ENCODE measurements at regions of chr9 and their contacts with region 1.

Region 1: GRCh38 chr9:31674264-31674663 is 710.2 kb upstream of the ACO1 start:
- DNase-seq: no peak
- H3K4me3 Mint-ChIP-seq: no peak overlapping the region
- H3K27ac Mint-ChIP-seq: no peak overlapping the region
- H3K4me1 Mint-ChIP-seq: peaks cover 32% of the 10 kb centered on the region
- H3K27me3 Mint-ChIP-seq: no peaks in the 10 kb centered on the region

Region 2: GRCh38 chr9:31347082-31347617 is 327.1 kb before region 1 on chr9:
- intact Hi-C with region 1: loop called (anchors 10 kb)
- DNase-seq: no peak
- H3K4me3 Mint-ChIP-seq: peak overlapping the region; percentile 71
- H3K27ac Mint-ChIP-seq: peak overlapping the region; percentile 94
- H3K4me1 Mint-ChIP-seq: peaks cover 33% of the 10 kb centered on the region
- H3K27me3 Mint-ChIP-seq: no peaks in the 10 kb centered on the region

Region 3: DNA sequence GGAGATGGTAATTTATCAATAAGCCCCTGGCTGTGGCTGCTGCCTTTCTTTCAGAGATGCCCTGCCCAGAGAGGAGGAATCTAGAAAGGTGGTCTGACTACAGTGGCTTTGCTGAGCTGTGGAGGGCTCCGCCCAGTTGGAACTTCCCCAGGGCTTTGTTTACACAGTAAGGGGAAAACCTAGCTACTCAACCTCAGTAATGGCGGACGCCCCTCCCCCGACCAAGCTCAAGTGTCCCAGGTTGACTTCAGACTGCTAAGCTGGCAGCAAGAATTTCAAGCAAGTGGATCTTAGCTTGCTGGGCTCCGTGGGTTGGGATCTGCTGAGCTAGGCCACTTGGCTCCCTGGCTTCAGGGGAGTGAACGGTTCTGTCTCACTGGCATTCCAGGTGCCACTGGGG is 155.3 kb before region 1 on chr9:
- intact Hi-C with region 1: no loop called
- DNase-seq: no peak
- H3K4me3 Mint-ChIP-seq: no peak overlapping the region
- H3K27ac Mint-ChIP-seq: no peak overlapping the region
- H3K4me1 Mint-ChIP-seq: no peaks in the 10 kb centered on the region
- H3K27me3 Mint-ChIP-seq: no peaks in the 10 kb centered on the region

Region 4: DNA sequence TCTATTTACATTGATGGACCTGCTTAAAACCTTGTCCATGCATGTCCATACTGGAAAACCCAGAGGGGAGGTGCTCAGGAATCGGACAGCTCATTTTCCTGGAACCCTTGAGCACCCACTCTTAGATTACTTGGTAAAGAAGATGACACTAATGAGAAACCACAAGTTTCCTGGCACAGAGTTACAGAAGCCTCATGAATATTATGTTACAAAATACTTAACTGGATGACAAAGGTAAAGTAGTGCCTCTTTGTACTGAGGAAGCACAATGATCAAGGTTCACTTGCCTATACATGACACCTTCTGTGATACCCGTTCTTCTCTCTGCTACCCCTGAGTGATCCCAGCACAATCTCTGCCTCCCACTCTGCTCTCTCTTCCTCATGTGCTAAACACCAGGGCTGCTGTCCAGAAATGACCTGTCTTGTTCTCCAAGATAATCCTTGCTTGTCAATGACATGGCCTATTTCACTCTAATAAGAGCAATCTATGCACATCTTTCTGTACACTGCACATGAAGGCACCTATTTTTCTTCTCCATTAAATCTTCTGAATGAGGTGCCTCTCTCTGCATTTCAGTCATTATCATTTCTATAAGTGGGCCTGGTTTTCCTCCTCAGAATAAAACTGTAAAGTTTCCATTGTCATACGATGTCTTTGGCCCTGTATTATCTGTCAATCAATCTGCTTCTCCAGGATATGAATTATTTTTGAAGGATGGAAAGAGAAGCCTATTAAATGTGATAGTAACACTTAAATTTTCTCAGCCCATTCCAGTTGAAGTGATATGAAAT is 26.2 kb after region 1 on chr9:
- intact Hi-C with region 1: loop called (anchors 1 kb)
- DNase-seq: no peak
- H3K4me3 Mint-ChIP-seq: no peak overlapping the region
- H3K27ac Mint-ChIP-seq: peak overlapping the region; percentile 74
- H3K4me1 Mint-ChIP-seq: peaks cover 13% of the 10 kb centered on the region
- H3K27me3 Mint-ChIP-seq: no peaks in the 10 kb centered on the region

Measured in activated T-helper 2 cell treated with anti-CD3 and anti-CD28 coated beads, Interferon-gamma antibody, Interleukin-2, Interleukin-4, amounts not matched to agents 10 μg/mL and 5 μg/mL and 100 μg/mL, durations not matched to agents 14 hours and 24 hours and 36 hours (primary cell).